Activated CD4-positive, alpha-beta T cell treated with anti-CD3 and anti-CD28 coated beads for 36 hours (primary cell): ENCODE measurements at regions of chr6 and their contacts with region 1.

Region 1: GRCh38 chr6:15621203-15622044 is 41.4 kb downstream of the DTNBP1 start:
- DNase-seq: peak; percentile 45
- ATAC-seq: peak; percentile 93
- H3K4me3 Mint-ChIP-seq: no peak overlapping the region
- H3K27ac Mint-ChIP-seq: peak overlapping the region; percentile 6
- H3K4me1 Mint-ChIP-seq: peaks cover 32% of the 10 kb centered on the region
- H3K27me3 Mint-ChIP-seq: peaks cover 2% of the 10 kb centered on the region

Region 2: GRCh38 chr6:13908955-13909381 is 1712.5 kb before region 1 on chr6:
- CTCF ChIA-PET with region 1: no interaction called
- POLR2A ChIA-PET with region 1: no interaction called
- intact Hi-C with region 1: loop called in 1 of 2 experiments (anchors 5 kb)
- DNase-seq: peak; percentile 63
- ATAC-seq: peak; percentile 74
- H3K4me3 Mint-ChIP-seq: no peak overlapping the region
- H3K27ac Mint-ChIP-seq: no peak overlapping the region
- H3K4me1 Mint-ChIP-seq: peaks cover 2% of the 10 kb centered on the region
- H3K27me3 Mint-ChIP-seq: peaks cover 28% of the 10 kb centered on the region

Region 3: GRCh38 chr6:14671261-14671681 is 950.2 kb before region 1 on chr6:
- CTCF ChIA-PET with region 1: no interaction called
- POLR2A ChIA-PET with region 1: no interaction called
- intact Hi-C with region 1: loop called in 1 of 2 experiments (anchors 10 kb)
- DNase-seq: no peak
- ATAC-seq: no peak
- H3K4me3 Mint-ChIP-seq: no peak overlapping the region
- H3K27ac Mint-ChIP-seq: no peak overlapping the region
- H3K4me1 Mint-ChIP-seq: peaks cover 42% of the 10 kb centered on the region
- H3K27me3 Mint-ChIP-seq: no peaks in the 10 kb centered on the region

Region 4: DNA sequence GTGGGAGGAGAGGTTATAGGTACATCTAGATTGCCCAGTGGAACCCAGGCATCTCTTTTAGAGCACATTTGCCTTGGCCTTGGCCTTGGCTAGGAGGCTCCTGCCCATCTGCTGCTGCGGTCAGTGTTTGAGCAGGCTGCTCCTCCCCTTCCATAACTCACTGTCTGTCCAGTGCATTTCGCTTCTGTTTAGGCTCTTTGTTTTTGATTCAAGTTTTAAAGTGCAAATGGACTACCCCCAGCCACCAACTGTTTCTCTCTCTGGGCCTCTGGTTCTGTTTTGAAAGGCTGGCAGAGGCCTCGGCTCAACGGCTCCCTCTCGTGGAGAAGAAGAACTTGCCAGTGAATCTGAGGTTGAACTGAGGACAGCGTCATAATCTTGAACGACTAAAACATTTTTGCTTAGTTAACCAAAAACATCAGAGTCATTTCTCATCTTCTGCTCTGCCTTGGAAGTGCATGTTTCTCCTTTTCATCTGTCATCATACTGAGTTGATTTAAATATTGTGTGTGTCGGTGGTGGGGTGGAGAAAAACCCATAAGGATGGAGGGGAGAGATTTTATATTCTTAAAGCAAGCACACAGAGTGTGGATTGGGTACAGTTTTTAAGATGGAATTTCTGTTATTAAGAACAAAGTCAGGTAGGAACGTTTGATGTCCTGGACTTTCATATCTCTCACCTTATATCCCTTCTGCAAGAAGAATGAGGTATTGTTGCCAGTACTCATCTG is 130.0 kb before region 1 on chr6:
- CTCF ChIA-PET with region 1: interaction called, 4 read pairs
- POLR2A ChIA-PET with region 1: no interaction called
- intact Hi-C with region 1: loop called (anchors 5 kb)
- DNase-seq: peak; percentile 86
- ATAC-seq: peak; percentile 82
- H3K4me3 Mint-ChIP-seq: no peak overlapping the region
- H3K27ac Mint-ChIP-seq: peak overlapping the region; percentile 82
- H3K4me1 Mint-ChIP-seq: peaks cover 42% of the 10 kb centered on the region
- H3K27me3 Mint-ChIP-seq: no peaks in the 10 kb centered on the region

Region 5: GRCh38 chr6:15608396-15608795 is 13.0 kb before region 1 on chr6:
- CTCF ChIA-PET with region 1: interaction called, 18 read pairs
- POLR2A ChIA-PET with region 1: no interaction called
- intact Hi-C with region 1: no loop called
- DNase-seq: no peak
- ATAC-seq: no peak
- H3K4me3 Mint-ChIP-seq: no peak overlapping the region
- H3K27ac Mint-ChIP-seq: no peak overlapping the region
- H3K4me1 Mint-ChIP-seq: peaks cover 9% of the 10 kb centered on the region
- H3K27me3 Mint-ChIP-seq: no peaks in the 10 kb centered on the region